Activated naive CD4-positive, alpha-beta T cell treated with anti-CD3 and anti-CD28 coated beads for 36 hours (primary cell): ENCODE measurements at regions of chr10 and their contacts with region 1.

Region 1: GRCh38 chr10:23338178-23338828 is 6.3 kb downstream of the C10orf67 start:
- DNase-seq: no peak
- H3K4me3 Mint-ChIP-seq: no peak overlapping the region
- H3K27ac Mint-ChIP-seq: peak overlapping the region; percentile 32
- H3K4me1 Mint-ChIP-seq: peaks cover 82% of the 10 kb centered on the region
- H3K27me3 Mint-ChIP-seq: no peaks in the 10 kb centered on the region

Region 2: DNA sequence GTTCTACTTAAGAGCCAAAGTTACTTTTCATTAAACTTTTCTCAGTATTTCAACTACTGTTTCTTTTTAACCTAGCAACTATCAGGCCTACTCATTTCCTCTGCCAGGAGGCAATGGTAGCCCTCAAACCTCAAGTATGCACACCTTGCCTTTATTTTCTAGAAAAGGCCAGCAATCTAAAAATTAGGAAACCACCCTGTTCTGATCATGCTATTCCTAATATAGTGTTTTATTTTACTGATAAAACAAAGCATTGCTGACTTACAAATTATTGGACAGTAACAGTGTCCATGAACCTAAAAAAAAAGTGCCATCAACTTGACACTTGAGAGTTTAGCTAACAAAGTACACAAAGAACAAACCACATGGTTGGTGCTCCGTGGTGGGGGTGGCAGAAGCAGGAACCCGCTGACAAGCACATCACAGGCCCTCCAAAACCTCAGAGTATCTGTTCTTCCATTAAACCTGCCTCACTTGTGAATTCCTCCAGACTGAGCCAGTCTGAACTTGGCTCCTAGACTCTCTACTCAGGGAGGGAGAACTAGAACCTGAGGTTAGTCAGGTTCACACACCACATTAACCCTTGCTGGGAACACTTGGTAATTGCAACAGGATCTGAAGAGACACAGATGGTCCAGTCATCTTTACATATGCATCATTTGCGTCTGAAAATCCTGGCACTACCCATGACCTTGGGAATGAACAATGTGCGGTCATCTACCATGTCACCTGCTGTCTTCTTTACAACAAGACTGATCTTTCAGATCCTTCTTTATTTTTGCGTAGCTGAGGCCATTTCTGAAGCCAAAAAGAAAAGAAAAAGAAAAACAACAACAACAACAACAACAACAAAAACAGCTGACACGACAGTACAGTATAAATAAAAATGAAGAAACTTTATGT is 655.8 kb before region 1 on chr10:
- CTCF ChIA-PET with region 1: no interaction called
- intact Hi-C with region 1: loop called (anchors 5 kb)
- DNase-seq: peak; percentile 73
- H3K4me3 Mint-ChIP-seq: peak overlapping the region; percentile 60
- H3K27ac Mint-ChIP-seq: peak overlapping the region; percentile 97
- H3K4me1 Mint-ChIP-seq: peaks cover 86% of the 10 kb centered on the region
- H3K27me3 Mint-ChIP-seq: no peaks in the 10 kb centered on the region

Region 3: DNA sequence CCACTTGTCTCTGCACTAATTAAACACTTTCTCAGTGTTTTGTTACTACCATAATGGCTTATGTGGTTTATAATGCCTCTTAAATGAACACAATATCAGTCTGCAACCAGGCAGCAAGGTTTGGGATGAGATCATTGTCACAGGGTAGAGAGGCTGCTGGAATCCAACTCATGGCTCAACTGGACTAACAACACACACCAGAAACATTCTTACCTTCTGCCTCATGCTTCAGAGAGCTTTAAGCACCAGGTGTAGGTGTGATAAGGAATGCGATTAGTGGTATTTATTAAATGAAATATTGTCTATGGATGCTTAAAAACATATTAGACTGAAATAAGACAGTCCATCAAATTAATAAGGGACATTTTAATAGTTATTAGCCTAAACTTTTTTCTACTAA is 120.8 kb before region 1 on chr10:
- CTCF ChIA-PET with region 1: no interaction called
- intact Hi-C with region 1: no loop called
- DNase-seq: no peak
- H3K4me3 Mint-ChIP-seq: no peak overlapping the region
- H3K27ac Mint-ChIP-seq: no peak overlapping the region
- H3K4me1 Mint-ChIP-seq: no peaks in the 10 kb centered on the region
- H3K27me3 Mint-ChIP-seq: peaks cover 8% of the 10 kb centered on the region

Region 4: GRCh38 chr10:23391821-23392220 is 53.5 kb after region 1 on chr10:
- CTCF ChIA-PET with region 1: interaction called, 3 read pairs
- intact Hi-C with region 1: loop called (anchors 2 kb)
- DNase-seq: peak; percentile 51
- H3K4me3 Mint-ChIP-seq: no peak overlapping the region
- H3K27ac Mint-ChIP-seq: no peak overlapping the region
- H3K4me1 Mint-ChIP-seq: peaks cover 11% of the 10 kb centered on the region
- H3K27me3 Mint-ChIP-seq: no peaks in the 10 kb centered on the region

Region 5: GRCh38 chr10:23535381-23535780 is 197.1 kb after region 1 on chr10:
- CTCF ChIA-PET with region 1: no interaction called
- intact Hi-C with region 1: loop called (anchors 1 kb)
- DNase-seq: no peak
- H3K4me3 Mint-ChIP-seq: peak overlapping the region; percentile 14
- H3K27ac Mint-ChIP-seq: peak overlapping the region; percentile 72
- H3K4me1 Mint-ChIP-seq: peaks cover 77% of the 10 kb centered on the region
- H3K27me3 Mint-ChIP-seq: no peaks in the 10 kb centered on the region

Region 6: GRCh38 chr10:24901686-24902399 is 1563.5 kb after region 1 on chr10:
- CTCF ChIA-PET with region 1: no interaction called
- intact Hi-C with region 1: loop called (anchors 10 kb)
- DNase-seq: peak; percentile 37
- H3K4me3 Mint-ChIP-seq: no peak overlapping the region
- H3K27ac Mint-ChIP-seq: no peak overlapping the region
- H3K4me1 Mint-ChIP-seq: peaks cover 33% of the 10 kb centered on the region
- H3K27me3 Mint-ChIP-seq: peaks cover 2% of the 10 kb centered on the region